ENCODE measurements at regions of chr17 and their contacts with region 1.

Region 1: DNA sequence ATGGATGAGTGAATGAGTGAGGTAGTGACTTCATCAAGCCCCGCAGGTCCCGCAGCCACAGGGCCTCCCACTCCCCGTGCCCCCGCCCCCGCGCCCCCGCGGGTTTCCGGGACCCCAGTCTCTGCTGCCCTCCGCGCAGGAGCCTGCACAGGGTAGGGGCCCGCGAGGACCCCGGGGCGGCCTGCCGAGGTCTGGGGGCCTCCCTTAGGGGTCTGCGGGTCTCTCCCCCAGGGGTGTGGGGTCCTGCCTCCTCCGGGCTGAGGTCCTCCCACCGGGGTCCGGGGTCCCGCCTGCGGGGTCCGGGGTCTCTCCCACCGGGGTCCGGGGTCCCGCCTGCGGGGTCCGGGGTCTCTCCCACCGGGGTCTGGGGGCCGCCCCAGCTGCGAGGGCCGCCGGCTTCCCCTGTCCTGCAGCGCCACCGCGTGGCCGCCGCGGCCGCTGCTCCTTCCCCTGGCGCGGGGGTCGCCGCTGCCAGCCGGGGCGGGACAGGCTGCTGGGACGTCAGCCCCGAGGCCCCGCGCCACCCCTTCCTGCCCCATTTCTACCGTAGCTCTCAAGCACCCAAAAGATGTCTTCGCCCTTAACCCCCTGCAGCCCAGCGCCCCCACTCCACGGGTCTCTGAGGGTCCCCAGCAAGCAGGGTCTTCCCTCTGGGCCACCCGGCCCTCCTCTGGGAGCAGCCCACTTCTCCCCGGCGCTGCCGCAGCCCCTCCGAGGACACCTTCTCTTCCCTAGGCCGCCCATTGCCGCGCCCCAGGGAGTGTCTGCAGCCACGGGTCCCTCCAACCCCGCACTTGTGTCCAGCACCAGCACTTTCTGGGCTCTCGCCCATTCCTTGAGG is 10.4 kb upstream of the CHMP6 start:
- DNase-seq: no peak
- ATAC-seq: peak; percentile 55 to 77
- H3K4me3 ChIP-seq: peak overlapping the region; percentile 41
- H3K27ac ChIP-seq: peak overlapping the region in 1 of 2 experiments; percentile 76; a peak in 3 of 6 replicates
- H3K4me1 ChIP-seq: peaks cover 4% of the 10 kb centered on the region; the same call in 2 of the 3 replicates
- CTCF ChIP-seq: peak; percentile 98
- EP300 ChIP-seq: no peak
- POLR2A ChIP-seq: no peak
- RAD21 ChIP-seq: peak; percentile 78 to 98

Region 2: DNA sequence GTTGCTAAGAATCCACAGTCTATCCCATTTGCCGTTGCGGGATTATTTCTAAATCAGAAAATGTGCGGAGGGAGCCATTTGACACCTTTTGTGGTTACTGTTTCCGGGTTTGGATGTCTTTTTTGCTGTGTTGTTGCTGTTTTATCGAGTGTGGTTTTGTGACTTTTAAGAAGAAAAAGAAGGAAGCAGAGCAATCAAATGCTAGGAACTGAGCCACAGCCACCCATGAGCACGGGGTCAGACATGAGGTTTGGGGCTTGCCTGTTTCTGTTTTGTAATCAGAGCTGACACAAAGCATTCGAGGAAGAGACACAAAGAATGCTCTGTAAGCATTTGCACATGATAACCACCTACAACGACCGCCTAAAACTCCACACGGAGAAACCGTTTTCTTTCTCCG is 42.7 kb before region 1 on chr17:
- CTCF ChIA-PET with region 1: no interaction called
- POLR2A ChIA-PET with region 1: no interaction called
- DNase-seq: no peak
- ATAC-seq: no peak
- H3K4me3 ChIP-seq: no peak overlapping the region
- H3K27ac ChIP-seq: no peak overlapping the region
- H3K4me1 ChIP-seq: no peaks in the 10 kb centered on the region
- CTCF ChIP-seq: no peak
- EP300 ChIP-seq: no peak
- POLR2A ChIP-seq: no peak
- RAD21 ChIP-seq: no peak

Region 3: GRCh38 chr17:80950466-80951120 is 30.7 kb before region 1 on chr17:
- CTCF ChIA-PET with region 1: no interaction called
- POLR2A ChIA-PET with region 1: no interaction called
- DNase-seq: no peak
- ATAC-seq: no peak
- H3K4me3 ChIP-seq: no peak overlapping the region
- H3K27ac ChIP-seq: no peak overlapping the region
- H3K4me1 ChIP-seq: no peaks in the 10 kb centered on the region
- CTCF ChIP-seq: no peak
- EP300 ChIP-seq: no peak
- POLR2A ChIP-seq: no peak
- RAD21 ChIP-seq: no peak

Region 4: GRCh38 chr17:80970044-80970761 is 11.1 kb before region 1 on chr17:
- CTCF ChIA-PET with region 1: interaction called, 20 read pairs
- POLR2A ChIA-PET with region 1: no interaction called
- DNase-seq: peak; percentile 44 to 75
- ATAC-seq: peak; percentile 65 to 77
- H3K4me3 ChIP-seq: no peak overlapping the region
- H3K27ac ChIP-seq: no peak overlapping the region
- H3K4me1 ChIP-seq: no peaks in the 10 kb centered on the region
- CTCF ChIP-seq: peak; percentile 37; the same call in 2 of the 3 replicates
- EP300 ChIP-seq: no peak
- POLR2A ChIP-seq: no peak
- RAD21 ChIP-seq: peak; percentile 58 to 65; a peak in 4 of 5 replicates

Region 5: DNA sequence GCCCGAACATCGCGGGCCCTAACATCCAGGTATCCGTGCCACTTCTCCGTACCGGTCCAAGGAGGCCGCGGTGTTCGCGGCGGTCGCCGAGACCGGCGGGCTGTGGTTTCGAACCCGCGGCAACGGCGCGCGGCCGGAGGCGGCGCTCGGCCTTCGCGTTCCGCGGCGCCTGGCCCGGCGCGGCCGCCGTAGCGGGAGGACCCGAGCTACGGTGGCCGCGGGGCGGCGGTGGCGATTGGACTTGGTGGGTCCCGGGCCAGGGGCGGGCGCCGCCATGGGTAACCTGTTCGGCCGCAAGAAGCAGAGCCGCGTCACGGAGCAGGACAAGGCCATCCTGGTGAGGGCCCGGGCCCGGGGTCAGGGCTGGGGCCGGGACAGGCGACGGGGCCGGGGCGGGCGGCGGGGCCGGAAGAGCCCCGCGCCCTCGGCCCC is 10.4 kb after region 1 on chr17 and contains the start of gene CHMP6:
- CTCF ChIA-PET with region 1: interaction called, 19 read pairs
- POLR2A ChIA-PET with region 1: no interaction called
- DNase-seq: peak; percentile 85 to 87
- ATAC-seq: peak; percentile 42 to 51
- H3K4me3 ChIP-seq: peak within 1 kb of the TSS; percentile 92
- H3K27ac ChIP-seq: peak within 1 kb of the TSS; percentile 89 to 95
- H3K4me1 ChIP-seq: peaks cover 20% of the 10 kb centered on the region
- CTCF ChIP-seq: peak; percentile 13; the same call in 1 of the 3 replicates
- EP300 ChIP-seq: no peak
- POLR2A ChIP-seq: peak; percentile 29; the same call in 1 of the 2 replicates
- RAD21 ChIP-seq: no peak
- polyA plus RNA-seq, gene CHMP6: 17.8 and 28.9 TPM in 2 replicates

Region 6: GRCh38 chr17:81171941-81172340 is 190.7 kb after region 1 on chr17:
- CTCF ChIA-PET with region 1: no interaction called
- POLR2A ChIA-PET with region 1: no interaction called
- DNase-seq: no peak
- ATAC-seq: no peak
- H3K4me3 ChIP-seq: no peak overlapping the region
- H3K27ac ChIP-seq: no peak overlapping the region
- H3K4me1 ChIP-seq: no peaks in the 10 kb centered on the region
- CTCF ChIP-seq: no peak
- EP300 ChIP-seq: no peak
- POLR2A ChIP-seq: no peak
- RAD21 ChIP-seq: no peak

Region 7: DNA sequence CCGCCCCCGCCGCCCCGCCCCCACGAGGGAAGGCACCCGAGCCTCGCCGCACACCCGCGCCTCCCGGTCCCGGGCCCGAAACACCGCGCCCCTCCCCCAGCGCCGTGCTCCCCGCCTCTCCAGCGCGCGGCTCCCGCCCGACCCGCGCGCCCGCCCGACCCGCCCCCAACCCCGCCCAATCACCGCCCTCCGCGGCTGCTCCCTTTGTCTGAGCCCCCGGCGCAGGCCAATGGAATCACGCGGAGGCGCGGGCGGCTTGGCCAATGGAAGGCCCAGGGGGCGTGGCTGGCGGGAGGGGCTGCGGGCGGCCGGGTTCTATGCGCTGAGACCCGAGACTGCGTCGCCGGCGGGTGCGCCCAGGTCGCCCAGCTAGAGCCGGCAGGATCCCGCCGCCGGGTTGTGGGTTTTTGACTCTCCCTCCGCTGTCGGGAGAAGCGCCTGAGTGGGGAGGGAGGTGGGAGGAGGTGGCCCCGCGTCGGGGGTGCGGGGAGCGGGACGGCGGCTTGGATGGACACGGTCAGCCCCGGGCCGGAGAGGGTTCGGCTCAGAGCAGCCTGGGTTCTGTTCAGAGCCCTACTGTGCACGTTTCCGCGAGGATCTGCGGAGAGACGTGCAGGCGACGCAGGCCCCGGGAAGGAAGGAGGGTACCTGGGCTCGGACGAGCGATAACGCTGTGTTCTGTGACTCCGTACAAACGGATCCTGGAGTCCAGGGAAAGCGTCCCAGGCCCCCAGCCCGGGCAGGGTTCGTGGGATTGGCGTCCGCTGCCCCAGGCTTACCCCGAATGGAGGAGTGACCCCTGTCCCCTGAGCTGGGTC is 365.0 kb after region 1 on chr17:
- CTCF ChIA-PET with region 1: no interaction called
- POLR2A ChIA-PET with region 1: no interaction called
- DNase-seq: peak; percentile 97 to 99
- ATAC-seq: peak; percentile 68 to 85
- H3K4me3 ChIP-seq: peak overlapping the region; percentile 72
- H3K27ac ChIP-seq: peak overlapping the region; percentile 92 to 94
- H3K4me1 ChIP-seq: peaks cover 27% of the 10 kb centered on the region
- CTCF ChIP-seq: no peak
- EP300 ChIP-seq: no peak
- POLR2A ChIP-seq: peak; percentile 78
- RAD21 ChIP-seq: peak in 1 of 2 experiments; percentile 11; a peak in 1 of 5 replicates

Measured in A549 (cell line).